ENCODE measurements at regions of chr3 and their contacts with region 1.

Region 1: DNA sequence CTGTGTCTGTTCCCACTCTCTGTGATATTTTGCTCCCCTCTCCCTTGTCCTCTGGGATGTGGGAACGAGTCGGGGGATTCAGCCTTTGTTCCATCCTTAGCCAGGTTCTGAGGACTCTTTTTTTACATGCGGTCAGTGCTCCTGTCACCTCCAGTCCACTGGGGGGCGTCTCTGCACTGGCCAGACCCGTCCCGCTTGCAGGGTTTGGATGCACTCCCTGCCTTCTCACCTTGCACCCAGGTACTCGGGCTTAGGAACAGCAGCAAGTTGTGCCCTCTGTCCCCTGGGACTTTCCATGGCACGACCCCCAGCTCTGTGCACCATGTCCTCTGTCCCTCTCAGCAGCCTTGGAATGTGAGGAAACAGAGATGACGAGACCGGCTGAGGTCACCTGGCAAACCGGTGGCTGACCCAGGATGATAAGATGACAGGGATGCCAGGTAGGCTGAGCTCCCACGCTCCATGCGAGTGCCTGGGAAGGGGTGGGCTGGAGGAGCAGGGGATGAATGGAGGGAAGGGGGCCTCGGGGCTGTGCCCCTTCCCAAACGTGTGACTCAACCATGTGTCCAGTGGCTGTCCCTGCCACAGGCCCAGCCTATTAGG is 27.3 kb upstream of the FGD5 start:
- DNase-seq: peak; percentile 18 to 46
- ATAC-seq: peak in 1 of 2 donors; percentile 59
- H3K4me3 ChIP-seq: no peak overlapping the region
- H3K27ac ChIP-seq: no peak overlapping the region
- H3K4me1 ChIP-seq: peaks cover 0 to 4% of the 10 kb centered on the region in 2 donors
- H3K27me3 ChIP-seq: no peaks in the 10 kb centered on the region
- CTCF ChIP-seq: peak; percentile 32 to 67 (median 62)
- POLR2A ChIP-seq: no peak

Region 2: DNA sequence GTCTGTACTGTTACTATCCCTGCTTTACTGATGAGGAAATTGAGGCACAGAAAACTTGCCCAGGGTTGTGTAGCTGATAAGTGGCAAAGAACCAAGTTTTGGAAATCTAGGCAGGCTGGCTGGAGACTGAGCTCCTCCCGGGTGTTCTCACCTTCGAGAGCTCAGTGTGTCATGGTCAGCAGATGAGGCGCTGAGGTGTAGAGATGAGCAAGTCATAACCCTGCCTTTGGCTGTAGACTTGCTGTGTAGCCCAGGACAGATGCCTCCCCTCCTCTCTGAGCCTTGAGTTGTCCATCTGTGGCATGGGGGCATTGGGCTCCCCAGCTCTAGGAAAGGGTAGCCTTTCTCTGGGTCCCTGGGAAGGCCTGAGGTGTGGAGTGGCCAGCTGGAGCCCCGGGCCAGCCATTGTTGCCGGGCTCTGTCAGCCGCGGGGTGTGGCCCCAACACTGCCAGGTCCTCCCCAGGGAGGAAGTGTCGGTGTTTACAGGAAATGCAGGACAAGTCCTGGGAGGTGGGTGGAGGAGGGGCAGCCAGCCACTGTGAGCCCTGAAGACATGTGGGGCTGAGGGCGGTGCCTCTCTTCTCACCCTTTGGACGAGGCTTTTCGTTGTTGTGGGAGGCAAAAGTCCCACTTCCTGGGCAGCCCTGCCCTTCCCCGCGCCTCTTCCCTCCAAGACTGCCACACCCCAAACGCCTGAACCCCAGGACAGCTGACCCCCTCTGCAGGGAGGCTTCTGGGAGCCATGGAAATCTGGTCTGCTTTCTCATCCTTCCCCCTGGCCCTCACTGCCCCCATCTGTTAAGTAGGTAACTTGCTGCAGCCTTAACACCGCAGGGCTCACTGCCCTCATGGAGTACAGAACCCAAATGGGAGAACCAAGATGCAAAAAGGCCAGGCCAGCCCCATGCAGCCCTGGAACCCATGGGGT is 56.4 kb after region 1 on chr3:
- in situ Hi-C with region 1: no loop called
- intact Hi-C with region 1: loop called (anchors 10 kb)
- DNase-seq: peak; percentile 41 to 66
- ATAC-seq: peak; percentile 31 to 68
- H3K4me3 ChIP-seq: no peak overlapping the region
- H3K27ac ChIP-seq: peak overlapping the region; percentile 23 to 75 (median 64)
- H3K4me1 ChIP-seq: peaks cover 6 to 14% of the 10 kb centered on the region in 2 donors
- H3K27me3 ChIP-seq: no peaks in the 10 kb centered on the region
- CTCF ChIP-seq: no peak
- POLR2A ChIP-seq: no peak